T-cell (primary cell): ENCODE measurements at regions of chr15 and their contacts with region 1.

Region 1: DNA sequence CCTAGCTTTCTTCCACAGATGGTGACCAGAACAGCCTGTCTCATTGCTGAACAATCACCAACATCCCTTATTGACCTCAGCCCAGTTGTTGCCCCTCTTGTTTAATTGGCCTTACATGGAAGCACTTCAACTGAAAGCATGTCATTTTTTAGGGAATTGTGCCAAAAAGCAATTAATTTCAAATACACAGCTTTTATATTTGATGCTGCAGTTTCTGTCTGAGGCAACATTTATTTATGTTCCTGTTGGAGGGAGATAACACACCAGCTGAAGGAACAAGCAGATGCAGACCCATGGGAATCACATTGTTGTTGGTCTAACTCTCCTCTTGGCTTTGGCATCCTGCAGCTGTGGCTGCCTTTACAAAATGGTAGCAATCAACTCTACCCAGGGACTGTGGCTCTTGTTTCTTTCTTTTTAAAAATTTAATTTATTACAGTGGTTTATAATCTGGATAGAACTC is 498.1 kb upstream of the RGMA start:
- DNase-seq: no peak
- ATAC-seq: no peak
- H3K4me3 ChIP-seq: no peak overlapping the region
- H3K4me3 Mint-ChIP-seq: no peak overlapping the region
- H3K27ac ChIP-seq: no peak overlapping the region
- H3K27ac Mint-ChIP-seq: no peak overlapping the region
- H3K4me1 ChIP-seq: no peaks in the 10 kb centered on the region
- H3K4me1 Mint-ChIP-seq: no peaks in the 10 kb centered on the region
- H3K27me3 ChIP-seq: peaks cover 0 to 4% of the 10 kb centered on the region in 2 experiments
- H3K27me3 Mint-ChIP-seq: peaks cover 0 to 23% of the 10 kb centered on the region in 2 donors

Region 2: DNA sequence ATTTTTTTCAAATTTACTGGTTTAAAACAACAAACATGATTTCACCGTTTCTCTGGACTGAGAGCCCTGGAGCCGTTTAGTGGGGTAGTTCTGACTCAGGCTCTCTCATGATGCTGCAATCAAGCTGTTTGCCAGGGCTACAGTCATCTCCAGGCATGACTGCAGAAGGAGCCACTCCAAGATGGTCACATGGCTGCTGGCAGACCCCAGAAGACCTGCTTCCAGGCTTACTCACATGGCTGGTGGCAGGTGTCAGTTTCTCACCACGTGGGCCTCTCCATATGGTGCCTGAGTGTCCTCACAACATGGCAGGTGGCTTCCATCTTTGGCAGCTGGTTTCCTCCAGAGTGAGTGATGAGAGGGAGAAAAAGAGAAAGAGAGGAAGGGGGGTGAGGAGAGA is 119.8 kb before region 1 on chr15:
- CTCF ChIA-PET with region 1: no interaction called
- POLR2A ChIA-PET with region 1: interaction called in 1 of 2 experiments, 13 read pairs
- DNase-seq: no peak
- ATAC-seq: no peak
- H3K4me3 ChIP-seq: no peak overlapping the region
- H3K4me3 Mint-ChIP-seq: no peak overlapping the region
- H3K27ac ChIP-seq: no peak overlapping the region
- H3K27ac Mint-ChIP-seq: no peak overlapping the region
- H3K4me1 ChIP-seq: no peaks in the 10 kb centered on the region
- H3K4me1 Mint-ChIP-seq: no peaks in the 10 kb centered on the region
- H3K27me3 ChIP-seq: peaks cover 3 to 5% of the 10 kb centered on the region in 2 experiments
- H3K27me3 Mint-ChIP-seq: peaks cover 1 to 3% of the 10 kb centered on the region in 2 donors

Region 3: GRCh38 chr15:93570527-93570926 is 16.6 kb before region 1 on chr15:
- CTCF ChIA-PET with region 1: no interaction called
- POLR2A ChIA-PET with region 1: no interaction called
- DNase-seq: no peak
- ATAC-seq: no peak
- H3K4me3 ChIP-seq: no peak overlapping the region
- H3K4me3 Mint-ChIP-seq: no peak overlapping the region
- H3K27ac ChIP-seq: no peak overlapping the region
- H3K27ac Mint-ChIP-seq: no peak overlapping the region
- H3K4me1 ChIP-seq: no peaks in the 10 kb centered on the region
- H3K4me1 Mint-ChIP-seq: no peaks in the 10 kb centered on the region
- H3K27me3 ChIP-seq: peaks cover 0 to 2% of the 10 kb centered on the region in 2 experiments
- H3K27me3 Mint-ChIP-seq: peaks cover 0 to 11% of the 10 kb centered on the region in 2 donors

Region 4: GRCh38 chr15:93608643-93609148 is 21.6 kb after region 1 on chr15:
- CTCF ChIA-PET with region 1: no interaction called
- POLR2A ChIA-PET with region 1: no interaction called
- DNase-seq: no peak
- ATAC-seq: no peak
- H3K4me3 ChIP-seq: no peak overlapping the region
- H3K4me3 Mint-ChIP-seq: no peak overlapping the region
- H3K27ac ChIP-seq: no peak overlapping the region
- H3K27ac Mint-ChIP-seq: no peak overlapping the region
- H3K4me1 ChIP-seq: no peaks in the 10 kb centered on the region
- H3K4me1 Mint-ChIP-seq: no peaks in the 10 kb centered on the region
- H3K27me3 ChIP-seq: no peaks in the 10 kb centered on the region
- H3K27me3 Mint-ChIP-seq: peaks cover 0 to 4% of the 10 kb centered on the region in 2 donors